CD4-positive, alpha-beta memory T cell (primary cell): ENCODE measurements at regions of chr14 and their contacts with region 1.

Region 1: DNA sequence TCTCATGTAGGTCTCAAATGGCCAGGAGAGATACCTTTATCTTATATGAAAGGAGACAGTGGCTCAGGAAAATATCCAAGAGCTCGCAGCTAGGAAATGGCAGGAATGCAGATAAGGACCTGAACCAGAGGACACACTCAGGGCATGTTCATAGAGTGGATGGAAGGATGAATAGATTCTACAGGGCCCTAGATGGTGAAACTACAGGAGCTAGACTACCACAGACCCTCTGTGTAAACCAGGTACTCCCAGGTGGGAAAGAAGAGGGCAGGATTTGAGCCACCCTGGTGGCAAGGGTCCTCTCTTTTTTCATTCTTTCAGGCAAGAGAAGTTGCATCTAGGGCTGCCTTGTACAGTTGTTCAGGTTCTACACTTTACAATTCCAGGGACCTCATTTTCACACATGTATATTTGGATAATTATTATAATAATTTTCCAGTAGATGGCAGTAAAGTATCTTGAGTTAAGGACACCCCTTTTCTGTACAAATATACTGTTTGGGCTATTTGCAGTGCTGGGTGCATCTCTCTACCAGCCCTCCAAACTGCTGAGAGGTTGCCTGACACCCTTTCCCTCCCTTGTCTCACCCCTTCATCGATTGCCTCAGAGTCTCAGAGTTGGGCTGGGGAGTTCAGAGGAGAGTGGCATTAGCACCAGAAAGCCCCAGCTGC is 10.5 kb upstream of the ZDHHC22 start:
- DNase-seq: peak in 4 of 5 donors; percentile 11 to 29 (median 16)
- H3K4me3 ChIP-seq: no peak overlapping the region
- H3K4me3 Mint-ChIP-seq: no peak overlapping the region
- H3K27ac ChIP-seq: no peak overlapping the region
- H3K27ac Mint-ChIP-seq: no peak overlapping the region
- H3K4me1 ChIP-seq: no peaks in the 10 kb centered on the region
- H3K4me1 Mint-ChIP-seq: no peaks in the 10 kb centered on the region
- H3K27me3 ChIP-seq: no peaks in the 10 kb centered on the region
- H3K27me3 Mint-ChIP-seq: peaks cover 13 to 48% of the 10 kb centered on the region in 2 donors

Region 2: GRCh38 chr14:77124345-77125280 is 27.4 kb before region 1 on chr14:
- CTCF ChIA-PET with region 1: interaction called, 10 read pairs
- POLR2A ChIA-PET with region 1: no interaction called
- intact Hi-C with region 1: no loop called
- DNase-seq: peak; percentile 72 to 83 (median 79)
- H3K4me3 ChIP-seq: peak overlapping the region; percentile 66 to 82
- H3K4me3 Mint-ChIP-seq: peak overlapping the region; percentile 85 to 92 (median 88)
- H3K27ac ChIP-seq: peak overlapping the region; percentile 45
- H3K27ac Mint-ChIP-seq: peak overlapping the region; percentile 50 to 95 (median 91)
- H3K4me1 ChIP-seq: peaks cover 57% of the 10 kb centered on the region
- H3K4me1 Mint-ChIP-seq: peaks cover 17 to 59% (median 45%) of the 10 kb centered on the region in 4 donors
- H3K27me3 ChIP-seq: no peaks in the 10 kb centered on the region
- H3K27me3 Mint-ChIP-seq: peaks cover 6 to 13% of the 10 kb centered on the region in 2 donors

Region 3: DNA sequence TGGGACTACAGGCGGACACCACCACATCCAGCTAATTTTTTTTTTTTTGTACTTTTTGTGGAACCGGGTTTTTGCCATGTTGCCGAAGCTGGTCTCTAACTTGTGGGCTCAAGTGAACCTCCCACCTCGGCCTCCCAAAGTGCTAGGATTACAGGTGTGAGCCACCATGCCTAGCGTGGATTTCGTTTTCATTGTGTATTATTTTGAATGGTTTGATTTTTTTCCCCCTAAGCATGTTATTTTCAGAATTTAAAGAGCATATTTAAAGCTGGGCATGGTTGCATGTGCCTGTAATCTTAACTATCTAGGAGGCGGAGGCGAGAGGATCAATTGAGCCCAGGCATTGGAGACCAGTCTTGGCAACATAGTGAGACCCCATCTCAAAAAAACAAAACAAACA is 42.7 kb after region 1 on chr14:
- CTCF ChIA-PET with region 1: no interaction called
- POLR2A ChIA-PET with region 1: no interaction called
- intact Hi-C with region 1: no loop called
- DNase-seq: no peak
- H3K4me3 ChIP-seq: no peak overlapping the region
- H3K4me3 Mint-ChIP-seq: peak overlapping the region in 1 of 8 donors; percentile 61
- H3K27ac ChIP-seq: no peak overlapping the region
- H3K27ac Mint-ChIP-seq: no peak overlapping the region
- H3K4me1 ChIP-seq: no peaks in the 10 kb centered on the region
- H3K4me1 Mint-ChIP-seq: no peaks in the 10 kb centered on the region
- H3K27me3 ChIP-seq: no peaks in the 10 kb centered on the region
- H3K27me3 Mint-ChIP-seq: peaks cover 9 to 15% of the 10 kb centered on the region in 2 donors

Region 4: GRCh38 chr14:77554207-77554606 is 402.2 kb after region 1 on chr14:
- CTCF ChIA-PET with region 1: no interaction called
- POLR2A ChIA-PET with region 1: no interaction called
- intact Hi-C with region 1: loop called (anchors 2 kb)
- DNase-seq: no peak
- H3K4me3 ChIP-seq: no peak overlapping the region
- H3K4me3 Mint-ChIP-seq: peak overlapping the region in 5 of 8 donors; percentile 14 to 32 (median 23)
- H3K27ac ChIP-seq: no peak overlapping the region
- H3K27ac Mint-ChIP-seq: peak overlapping the region in 6 of 7 donors; percentile 10 to 88 (median 65)
- H3K4me1 ChIP-seq: peaks cover 5% of the 10 kb centered on the region
- H3K4me1 Mint-ChIP-seq: peaks cover 0 to 8% (median 6%) of the 10 kb centered on the region in 4 donors
- H3K27me3 ChIP-seq: no peaks in the 10 kb centered on the region
- H3K27me3 Mint-ChIP-seq: no peaks in the 10 kb centered on the region